ENCODE measurements at regions of chr5 and their contacts with region 1.

Region 1: DNA sequence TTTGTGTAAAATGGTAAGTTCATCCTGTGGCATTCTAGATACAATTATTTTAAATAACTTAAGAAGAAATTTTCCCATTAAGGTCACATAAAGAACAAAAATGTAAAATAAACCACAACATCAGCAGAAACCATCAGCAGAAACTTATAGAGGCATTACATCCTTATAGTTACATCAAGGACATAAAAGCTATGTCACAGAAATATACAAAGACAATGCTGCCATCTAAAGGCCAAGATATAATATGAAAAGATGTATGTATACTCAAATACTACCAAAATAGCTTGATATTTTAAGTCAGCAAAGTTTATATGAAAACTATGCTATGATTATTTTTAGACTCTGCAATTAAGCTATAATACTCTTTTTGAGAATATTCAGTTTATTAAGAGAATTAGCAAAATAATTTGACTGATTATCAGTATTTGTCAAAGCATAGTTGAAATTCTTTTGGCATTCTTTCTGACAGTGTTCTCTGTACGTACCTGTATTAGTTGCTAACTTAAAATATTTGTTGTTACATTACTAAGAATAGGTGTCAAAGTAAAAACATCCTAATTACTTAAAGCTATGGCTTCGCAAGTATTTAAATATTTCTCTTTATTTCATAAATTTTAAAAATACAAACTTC is 36.2 kb downstream of the FBXL17 start:
- DNase-seq: peak; percentile 43
- ATAC-seq: peak; percentile 65; the same call in 2 of the 3 replicates
- H3K4me3 ChIP-seq: no peak overlapping the region
- H3K27ac ChIP-seq: no peak overlapping the region
- H3K4me1 ChIP-seq: no peaks in the 10 kb centered on the region
- H3K27me3 ChIP-seq: no peaks in the 10 kb centered on the region
- CTCF ChIP-seq: peak; percentile 56
- EP300 ChIP-seq: no peak
- POLR2A ChIP-seq: no peak
- RAD21 ChIP-seq: 0 out of 2 replicates have a peak, but pooled peaks have one; percentile 19

Region 2: DNA sequence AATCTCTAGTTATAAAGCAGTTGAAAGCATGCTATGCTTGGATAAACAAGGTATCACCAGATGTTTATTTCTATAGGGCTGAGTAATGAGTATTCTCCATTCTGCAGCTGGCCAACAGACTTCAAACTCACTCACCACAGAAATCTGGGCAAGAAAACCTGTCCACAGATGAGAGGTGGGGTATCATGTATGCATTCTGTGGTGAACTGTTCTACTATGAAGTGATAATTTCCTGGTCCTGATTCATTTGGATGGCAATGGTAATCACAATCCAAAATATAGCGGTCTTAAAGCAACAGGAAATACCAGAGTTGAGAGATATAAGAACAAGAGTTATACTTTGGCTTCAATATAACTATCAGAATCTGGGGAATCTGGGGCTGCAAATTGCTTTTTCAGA is 609.0 kb before region 1 on chr5:
- CTCF ChIA-PET with region 1: no interaction called
- POLR2A ChIA-PET with region 1: no interaction called
- in situ Hi-C with region 1: no loop called
- intact Hi-C with region 1: no loop called
- DNase-seq: no peak
- ATAC-seq: no peak
- H3K4me3 ChIP-seq: no peak overlapping the region
- H3K27ac ChIP-seq: no peak overlapping the region
- H3K4me1 ChIP-seq: no peaks in the 10 kb centered on the region
- H3K27me3 ChIP-seq: no peaks in the 10 kb centered on the region
- CTCF ChIP-seq: no peak
- EP300 ChIP-seq: no peak
- POLR2A ChIP-seq: no peak
- RAD21 ChIP-seq: no peak

Region 3: GRCh38 chr5:108260117-108260857 is 85.4 kb before region 1 on chr5:
- CTCF ChIA-PET with region 1: interaction called, 36 read pairs
- POLR2A ChIA-PET with region 1: no interaction called
- in situ Hi-C with region 1: loop called (anchors 5 kb)
- intact Hi-C with region 1: loop called (anchors 1 kb)
- DNase-seq: peak; percentile 58
- ATAC-seq: peak; percentile 96
- H3K4me3 ChIP-seq: no peak overlapping the region
- H3K27ac ChIP-seq: no peak overlapping the region
- H3K4me1 ChIP-seq: no peaks in the 10 kb centered on the region
- H3K27me3 ChIP-seq: no peaks in the 10 kb centered on the region
- CTCF ChIP-seq: peak; percentile 91
- EP300 ChIP-seq: no peak
- POLR2A ChIP-seq: no peak
- RAD21 ChIP-seq: peak; percentile 73

Measured in HepG2 (cell line).